ENCODE measurements at regions of chr17 and their contacts with region 1.

Region 1: DNA sequence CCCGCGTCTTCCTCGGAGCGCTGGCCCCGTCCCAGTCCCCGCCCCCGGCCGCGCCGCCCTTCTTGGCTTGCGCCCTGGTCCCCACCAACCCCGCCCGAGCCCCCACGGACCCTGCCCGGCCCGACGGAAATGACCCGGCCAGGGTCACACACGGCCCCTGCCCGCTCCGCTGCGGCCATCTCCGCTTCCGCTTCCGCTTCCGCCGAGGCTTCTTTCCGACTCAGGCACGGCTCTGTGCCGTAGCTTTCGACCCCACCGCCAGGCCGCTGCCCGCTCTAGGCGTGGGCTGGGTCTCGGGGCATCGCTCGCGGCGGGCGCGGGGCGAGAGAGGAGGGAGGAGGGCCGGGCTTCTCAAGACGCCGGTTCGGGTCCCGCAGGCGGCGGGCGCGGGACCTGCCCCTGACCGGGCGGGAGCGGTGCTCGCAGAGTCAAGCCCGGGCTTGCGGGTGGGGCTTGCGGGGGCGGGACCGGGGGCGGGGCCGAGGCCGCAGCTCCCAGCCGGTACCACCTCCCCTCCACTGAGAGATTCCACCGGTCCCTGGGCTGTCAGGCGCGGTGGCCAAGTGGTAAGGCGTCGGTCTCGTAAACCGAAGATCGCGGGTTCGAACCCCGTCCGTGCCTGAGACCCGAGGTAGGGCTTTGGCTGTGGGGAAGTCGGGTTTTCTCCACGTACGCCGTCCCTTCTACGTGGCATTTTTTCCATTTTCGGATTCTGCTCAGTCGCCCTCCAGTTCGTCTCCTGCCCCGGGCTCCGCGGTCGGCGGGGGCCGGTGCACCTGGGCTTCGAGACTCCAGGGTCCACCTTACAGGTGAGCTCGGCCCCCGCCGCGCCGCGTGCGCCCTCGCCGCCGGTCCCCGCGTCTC is 158.3 kb downstream of the RAB11FIP4 start:
- DNase-seq: peak; percentile 95
- ATAC-seq: peak; percentile 81
- H3K4me3 Mint-ChIP-seq: peak overlapping the region; percentile 88
- H3K27ac Mint-ChIP-seq: peak overlapping the region; percentile 82
- H3K4me1 Mint-ChIP-seq: peaks cover 17% of the 10 kb centered on the region
- H3K27me3 Mint-ChIP-seq: no peaks in the 10 kb centered on the region

Region 2: GRCh38 chr17:31413874-31414549 is 135.7 kb before region 1 on chr17:
- CTCF ChIA-PET with region 1: no interaction called
- POLR2A ChIA-PET with region 1: no interaction called
- intact Hi-C with region 1: no loop called
- DNase-seq: no peak
- ATAC-seq: no peak
- H3K4me3 Mint-ChIP-seq: no peak overlapping the region
- H3K27ac Mint-ChIP-seq: no peak overlapping the region
- H3K4me1 Mint-ChIP-seq: no peaks in the 10 kb centered on the region
- H3K27me3 Mint-ChIP-seq: no peaks in the 10 kb centered on the region

Region 3: DNA sequence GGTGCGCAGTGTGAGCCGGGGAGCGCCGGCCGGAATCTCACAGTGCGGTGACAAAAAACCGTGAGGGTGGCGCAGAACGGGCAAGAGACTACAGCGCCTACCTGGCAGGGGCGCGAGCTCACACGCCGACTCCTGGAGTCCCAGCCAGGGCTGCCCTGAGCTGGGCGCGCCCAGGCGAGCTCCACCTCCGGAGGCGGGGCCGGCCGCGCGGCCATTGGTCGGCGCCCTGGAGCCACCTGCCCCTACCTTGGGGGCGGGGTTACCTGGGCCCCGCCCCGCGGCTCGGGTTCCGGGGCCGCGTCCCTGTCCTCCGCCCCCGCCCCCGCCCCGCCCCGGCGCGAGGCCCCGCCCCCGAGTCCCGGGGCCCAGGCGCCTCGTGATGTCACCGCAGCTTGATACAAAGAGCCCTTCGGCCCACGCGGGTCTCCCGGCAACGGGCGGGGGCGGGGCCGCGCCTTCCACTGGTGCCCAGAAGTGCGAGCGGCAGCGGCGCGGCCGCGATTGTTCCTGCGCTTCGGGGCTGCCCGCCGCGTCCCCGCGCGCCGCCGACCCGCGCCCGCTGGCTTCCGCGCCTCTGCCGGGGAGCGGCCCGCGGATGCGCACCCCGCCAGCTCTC is 62.0 kb before region 1 on chr17:
- CTCF ChIA-PET with region 1: no interaction called
- POLR2A ChIA-PET with region 1: no interaction called
- intact Hi-C with region 1: loop called in 1 of 2 experiments (anchors 1 kb)
- DNase-seq: peak; percentile 95
- ATAC-seq: peak; percentile 92
- H3K4me3 Mint-ChIP-seq: peak overlapping the region; percentile 84
- H3K27ac Mint-ChIP-seq: peak overlapping the region; percentile 82
- H3K4me1 Mint-ChIP-seq: peaks cover 48% of the 10 kb centered on the region
- H3K27me3 Mint-ChIP-seq: no peaks in the 10 kb centered on the region

Region 4: DNA sequence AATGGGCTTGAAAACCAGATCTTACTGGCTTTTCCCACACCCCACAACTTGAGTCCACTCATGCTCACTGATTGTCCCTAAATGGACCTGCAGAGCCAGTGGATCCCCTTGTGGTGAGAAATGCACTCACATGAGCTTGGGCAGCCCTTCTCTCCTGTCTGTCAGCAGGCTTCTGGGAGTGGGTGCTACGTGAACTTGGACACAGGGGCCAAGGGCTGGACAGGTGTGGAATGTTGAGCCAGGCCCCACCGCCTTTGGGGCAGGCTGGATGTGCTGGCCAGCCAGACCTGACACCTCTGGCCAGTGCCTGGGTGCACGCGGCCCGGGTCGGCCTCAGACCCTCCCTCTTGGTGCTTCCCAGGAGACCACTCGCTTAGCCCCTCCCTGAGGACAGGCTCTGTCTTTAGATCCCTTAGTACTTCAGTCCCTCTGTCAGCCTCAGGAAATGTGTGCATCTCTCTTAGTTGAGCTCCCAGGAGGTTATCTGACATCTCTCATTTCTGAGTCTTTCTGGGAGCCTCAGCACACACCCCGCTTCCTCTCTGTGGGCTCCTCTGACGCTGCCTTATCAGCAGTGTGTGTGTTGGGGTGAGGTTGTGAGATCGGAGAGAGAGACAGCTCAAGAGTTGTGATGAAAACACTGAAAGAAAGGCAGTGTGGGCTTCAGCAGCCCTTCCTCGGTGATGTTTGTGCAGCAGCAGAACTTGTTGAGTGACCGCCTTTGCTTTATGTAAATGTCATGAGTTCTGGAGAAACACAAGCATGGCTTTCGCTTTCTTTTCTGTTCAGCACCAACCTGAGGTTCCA is 41.3 kb before region 1 on chr17:
- CTCF ChIA-PET with region 1: interaction called, 4 read pairs
- POLR2A ChIA-PET with region 1: no interaction called
- intact Hi-C with region 1: loop called in 1 of 2 experiments (anchors 1 kb)
- DNase-seq: peak; percentile 79
- ATAC-seq: peak; percentile 85
- H3K4me3 Mint-ChIP-seq: peak overlapping the region; percentile 84
- H3K27ac Mint-ChIP-seq: peak overlapping the region; percentile 100
- H3K4me1 Mint-ChIP-seq: peaks cover 52% of the 10 kb centered on the region
- H3K27me3 Mint-ChIP-seq: no peaks in the 10 kb centered on the region

Region 5: GRCh38 chr17:31858642-31859473 is 309.1 kb after region 1 on chr17 and contains the start of gene COPRS:
- CTCF ChIA-PET with region 1: no interaction called
- POLR2A ChIA-PET with region 1: no interaction called
- intact Hi-C with region 1: loop called in 1 of 2 experiments (anchors 2 kb)
- DNase-seq: peak; percentile 91
- ATAC-seq: peak; percentile 77
- H3K4me3 Mint-ChIP-seq: peak within 1 kb of the TSS; percentile 84
- H3K27ac Mint-ChIP-seq: peak within 1 kb of the TSS; percentile 86
- H3K4me1 Mint-ChIP-seq: peaks cover 19% of the 10 kb centered on the region
- H3K27me3 Mint-ChIP-seq: no peaks in the 10 kb centered on the region
- total RNA-seq, gene COPRS: 35.0 to 41.3 TPM

Measured in activated CD4-positive, alpha-beta T cell treated with anti-CD3 and anti-CD28 coated beads for 36 hours (primary cell).